ENCODE measurements at regions of chr2 and their contacts with region 1.

Region 1: DNA sequence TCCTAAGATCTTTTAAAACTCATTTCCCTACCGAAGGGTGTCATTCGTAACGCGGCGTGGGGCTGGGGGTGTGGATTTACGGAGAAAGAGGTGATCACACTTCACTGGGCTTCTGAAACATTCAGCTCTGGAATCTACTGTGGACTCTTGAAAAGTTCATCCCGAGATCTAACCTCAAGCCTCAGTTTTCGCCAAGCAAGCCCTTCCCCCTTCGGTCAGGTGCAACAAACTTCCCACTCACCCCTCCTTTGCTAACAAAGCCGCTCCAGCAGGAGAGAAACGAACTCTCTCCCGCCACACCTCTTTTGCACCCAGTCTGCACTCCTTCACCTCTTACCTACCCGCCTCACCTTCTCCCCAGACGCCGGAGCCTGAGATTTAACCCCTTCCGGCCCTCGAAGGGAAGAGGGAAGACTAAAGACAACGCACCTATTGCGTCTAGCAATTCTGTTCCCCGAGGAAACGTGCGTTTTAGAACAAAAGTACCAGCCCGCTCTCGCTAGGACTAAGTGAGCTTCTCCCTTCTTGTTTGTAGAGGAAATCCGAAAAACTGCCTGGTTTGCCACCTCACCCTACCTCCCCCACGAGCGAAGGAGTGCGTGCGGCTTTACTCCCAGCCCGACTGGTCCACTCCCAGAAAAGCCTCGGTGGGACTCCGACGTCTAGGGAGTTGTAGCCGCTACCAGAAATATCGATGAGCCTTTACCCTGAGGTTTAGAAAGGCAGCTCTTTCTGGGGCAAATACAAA is 538 bp upstream of the PEX13 start:
- DNase-seq: peak; percentile 44
- H3K4me3 ChIP-seq: peak overlapping the region; percentile 86
- CTCF ChIP-seq: no peak

Region 2: DNA sequence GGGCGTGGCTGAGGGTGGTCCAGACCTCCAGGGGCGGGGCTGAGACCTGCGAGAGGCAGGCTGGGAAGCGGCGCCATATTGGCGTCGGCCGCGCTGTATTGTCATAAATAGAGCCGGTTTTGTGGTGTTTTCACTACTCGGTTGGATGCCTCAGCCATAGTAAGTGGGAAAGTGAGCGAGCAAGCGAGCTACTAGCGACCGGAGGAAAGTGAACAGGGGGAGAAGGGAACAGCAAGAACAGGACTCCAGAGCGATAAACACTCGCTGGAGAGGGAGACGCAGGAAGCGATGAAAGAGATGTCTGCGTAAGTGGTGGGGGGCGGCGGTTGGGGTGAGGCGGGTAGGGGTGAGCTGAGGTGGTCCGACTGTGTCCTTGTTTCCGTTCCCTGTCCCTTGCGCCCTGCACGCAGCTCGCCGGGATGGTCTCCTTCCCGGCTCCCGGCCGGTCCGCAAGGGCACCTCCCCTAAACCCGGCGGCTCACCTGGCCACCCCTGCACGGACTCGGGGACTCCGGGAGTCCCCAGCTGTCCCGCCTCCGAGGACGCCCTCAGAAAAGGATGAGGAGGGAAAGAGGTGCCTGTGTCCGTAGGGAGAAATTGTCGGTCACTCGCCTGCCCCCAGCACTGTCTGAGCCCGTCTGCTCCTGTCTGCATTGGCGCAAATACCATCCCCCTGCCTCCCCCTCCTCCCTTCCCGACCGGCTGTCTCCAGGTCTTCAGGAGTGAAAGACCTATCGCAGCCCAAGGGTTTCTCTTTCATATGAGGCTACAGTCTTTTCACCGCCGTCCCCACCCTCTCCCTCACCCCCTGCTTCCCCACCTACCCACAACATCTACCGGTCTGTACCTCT is 260.6 kb before region 1 on chr2 and contains the start of gene PAPOLG:
- in situ Hi-C with region 1: loop called (anchors 25 kb)
- DNase-seq: peak; percentile 76
- H3K4me3 ChIP-seq: peak within 1 kb of the TSS; percentile 87
- CTCF ChIP-seq: no peak

Measured in astrocyte of the cerebellum (primary cell).